Activated T-helper 1 cell treated with anti-CD3 and anti-CD28 coated beads, Interleukin-12 subunit alpha, Interleukin-12 subunit beta, Interleukin-2, Interleukin-4 antibody, amounts not matched to agents 30 ng/mL and 10 ng/mL and 1 ng/mL, durations not matched to agents 14 hours and 24 hours and 36 hours (primary cell): ENCODE measurements at regions of chr6 and their contacts with region 1.

Region 1: GRCh38 chr6:89371849-89372505 is 19.5 kb upstream of the UBE2J1 start:
- DNase-seq: peak; percentile 75
- H3K4me3 Mint-ChIP-seq: peak overlapping the region; percentile 49
- H3K27ac Mint-ChIP-seq: peak overlapping the region; percentile 59
- H3K4me1 Mint-ChIP-seq: peaks cover 46% of the 10 kb centered on the region
- H3K27me3 Mint-ChIP-seq: no peaks in the 10 kb centered on the region

Region 2: DNA sequence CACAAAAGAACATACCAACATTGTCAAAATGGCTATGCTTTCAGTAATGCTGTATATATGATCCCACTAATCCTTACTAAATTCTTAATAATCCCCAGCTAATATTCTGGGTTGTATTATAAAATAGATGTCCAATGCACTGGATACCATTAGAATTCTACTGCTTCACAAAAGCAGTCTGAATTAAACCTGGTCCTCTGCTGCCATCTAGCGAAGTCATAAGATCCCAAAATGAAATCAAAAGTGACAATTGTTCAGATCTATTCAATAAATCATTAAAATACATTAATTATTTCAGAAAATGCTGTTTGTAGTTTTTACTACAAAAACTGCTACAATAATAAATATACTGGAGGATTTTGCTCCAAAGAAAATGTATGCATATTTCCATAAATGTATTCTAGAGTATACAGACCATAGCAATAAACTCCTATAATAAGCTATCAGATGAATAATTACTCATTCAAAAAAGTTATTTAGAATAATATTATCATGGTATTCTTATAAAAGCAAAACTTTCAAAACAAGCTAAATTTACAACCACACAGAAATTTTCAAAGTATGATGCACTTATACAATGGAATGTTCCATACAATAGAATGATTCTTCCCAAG is 501.2 kb before region 1 on chr6:
- intact Hi-C with region 1: no loop called
- DNase-seq: peak; percentile 17
- H3K4me3 Mint-ChIP-seq: no peak overlapping the region
- H3K27ac Mint-ChIP-seq: no peak overlapping the region
- H3K4me1 Mint-ChIP-seq: peaks cover 44% of the 10 kb centered on the region
- H3K27me3 Mint-ChIP-seq: no peaks in the 10 kb centered on the region

Region 3: DNA sequence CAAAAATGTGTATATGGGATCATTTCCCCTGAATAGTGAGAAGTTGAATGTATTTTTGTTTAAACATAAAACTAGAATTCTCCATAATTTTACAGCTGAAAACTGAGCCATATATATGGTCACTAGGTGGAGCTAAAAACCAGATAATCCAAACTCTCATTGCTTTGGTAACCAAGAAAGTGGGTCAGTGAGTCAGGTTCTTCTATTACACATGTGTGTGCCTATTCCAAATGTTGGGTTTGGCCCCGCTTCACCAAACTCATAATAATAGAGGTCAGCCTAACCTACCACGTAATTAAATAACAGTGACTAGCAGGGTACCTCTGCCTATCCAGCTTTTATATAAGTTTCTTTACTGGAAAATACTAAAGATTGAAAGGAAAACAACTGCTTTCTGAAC is 389.3 kb before region 1 on chr6:
- intact Hi-C with region 1: loop called (anchors 1 kb)
- DNase-seq: no peak
- H3K4me3 Mint-ChIP-seq: no peak overlapping the region
- H3K27ac Mint-ChIP-seq: no peak overlapping the region
- H3K4me1 Mint-ChIP-seq: no peaks in the 10 kb centered on the region
- H3K27me3 Mint-ChIP-seq: peaks cover 4% of the 10 kb centered on the region

Region 4: GRCh38 chr6:89297695-89298351 is 74.2 kb before region 1 on chr6:
- intact Hi-C with region 1: loop called (anchors 1 kb)
- DNase-seq: peak; percentile 64
- H3K4me3 Mint-ChIP-seq: peak overlapping the region; percentile 43
- H3K27ac Mint-ChIP-seq: peak overlapping the region; percentile 97
- H3K4me1 Mint-ChIP-seq: peaks cover 28% of the 10 kb centered on the region
- H3K27me3 Mint-ChIP-seq: peaks cover 2% of the 10 kb centered on the region

Region 5: GRCh38 chr6:89360415-89360999 is 11.5 kb before region 1 on chr6:
- intact Hi-C with region 1: loop called (anchors 1 kb)
- DNase-seq: no peak
- H3K4me3 Mint-ChIP-seq: peak overlapping the region; percentile 16
- H3K27ac Mint-ChIP-seq: peak overlapping the region; percentile 74
- H3K4me1 Mint-ChIP-seq: peaks cover 73% of the 10 kb centered on the region
- H3K27me3 Mint-ChIP-seq: no peaks in the 10 kb centered on the region

Region 6: DNA sequence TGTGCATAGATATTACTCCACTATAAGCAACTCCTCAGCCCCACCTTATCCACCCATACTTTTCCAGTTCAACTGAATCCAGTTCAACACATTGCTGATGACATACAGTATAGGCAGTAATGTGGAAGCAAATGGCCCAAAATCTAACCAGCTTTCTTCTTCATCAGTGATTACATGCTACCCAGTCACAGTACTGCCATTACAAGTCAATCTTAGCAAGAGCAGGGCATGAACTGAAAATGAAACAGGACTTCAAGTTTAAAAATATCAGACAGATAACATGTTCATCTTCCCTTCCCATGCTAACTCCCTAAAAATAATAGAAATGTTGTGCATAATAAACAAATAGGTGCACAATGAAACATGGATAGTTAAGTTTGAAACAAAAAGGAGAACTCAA is 20.8 kb after region 1 on chr6:
- intact Hi-C with region 1: no loop called
- DNase-seq: no peak
- H3K4me3 Mint-ChIP-seq: no peak overlapping the region
- H3K27ac Mint-ChIP-seq: no peak overlapping the region
- H3K4me1 Mint-ChIP-seq: peaks cover 5% of the 10 kb centered on the region
- H3K27me3 Mint-ChIP-seq: peaks cover 2% of the 10 kb centered on the region

Region 7: DNA sequence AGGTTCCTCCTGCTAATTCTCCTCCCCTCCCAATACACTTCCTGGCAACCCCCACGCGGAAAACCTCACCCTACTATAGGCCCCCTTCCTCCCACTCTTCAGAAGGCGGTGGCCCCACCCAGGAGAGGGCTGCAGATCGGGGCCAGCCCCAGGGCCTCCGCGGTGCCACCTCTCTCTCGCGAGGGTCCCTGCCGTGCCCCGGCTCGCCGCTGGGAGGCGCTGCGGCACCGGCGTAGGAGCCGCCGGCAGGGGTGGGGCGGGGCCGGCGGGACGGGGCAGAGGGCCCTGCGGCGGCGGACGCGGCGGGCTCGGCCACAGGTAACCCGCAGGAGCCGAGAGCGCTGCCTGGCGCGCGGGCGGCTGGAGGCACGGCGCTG is 60.9 kb after region 1 on chr6 and contains the start of gene ANKRD6:
- intact Hi-C with region 1: loop called (anchors 1 kb)
- DNase-seq: peak; percentile 80
- H3K4me3 Mint-ChIP-seq: peak within 1 kb of the TSS; percentile 87
- H3K27ac Mint-ChIP-seq: peak within 1 kb of the TSS; percentile 70
- H3K4me1 Mint-ChIP-seq: peaks cover 18% of the 10 kb centered on the region
- H3K27me3 Mint-ChIP-seq: peaks cover 32% of the 10 kb centered on the region
- total RNA-seq, gene ANKRD6: 1.3 and 2.3 TPM in 2 replicates

Region 8: DNA sequence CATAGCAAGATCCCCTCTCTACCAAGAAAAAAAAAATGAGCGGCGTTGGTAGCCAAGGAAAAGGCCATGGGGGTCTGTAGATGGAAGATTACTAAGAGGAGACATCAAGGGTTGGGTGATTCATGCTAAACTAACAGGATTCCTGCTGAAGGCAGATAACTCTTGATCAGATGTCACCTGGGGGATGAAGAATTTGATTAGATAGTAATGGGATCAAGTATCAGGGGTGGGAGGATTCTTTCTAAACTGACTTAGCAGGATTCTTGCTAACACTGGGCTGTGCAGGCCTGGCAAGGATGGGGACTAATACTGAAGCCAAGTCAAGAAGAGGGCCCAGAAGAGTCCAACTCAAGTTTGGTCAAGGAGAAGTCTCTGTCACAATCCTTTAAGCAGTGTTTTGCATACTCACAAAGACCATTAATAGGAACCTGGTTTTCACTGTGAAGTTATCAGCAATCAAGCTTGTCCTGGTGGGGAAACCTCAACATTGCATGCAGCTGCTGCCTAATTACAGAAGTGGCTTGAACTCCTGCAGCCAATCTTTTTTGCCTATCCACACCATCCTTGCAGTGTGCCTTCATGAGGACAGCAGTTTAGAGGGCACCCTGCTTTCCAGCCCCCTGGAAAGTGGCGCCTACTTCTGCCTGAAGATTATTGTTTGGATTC is 122.3 kb after region 1 on chr6:
- intact Hi-C with region 1: no loop called
- DNase-seq: no peak
- H3K4me3 Mint-ChIP-seq: no peak overlapping the region
- H3K27ac Mint-ChIP-seq: no peak overlapping the region
- H3K4me1 Mint-ChIP-seq: no peaks in the 10 kb centered on the region
- H3K27me3 Mint-ChIP-seq: peaks cover 10% of the 10 kb centered on the region

Region 9: GRCh38 chr6:89597988-89598692 is 226.2 kb after region 1 on chr6:
- intact Hi-C with region 1: loop called (anchors 5 kb)
- DNase-seq: no peak
- H3K4me3 Mint-ChIP-seq: peak overlapping the region; percentile 12
- H3K27ac Mint-ChIP-seq: peak overlapping the region; percentile 75
- H3K4me1 Mint-ChIP-seq: peaks cover 45% of the 10 kb centered on the region
- H3K27me3 Mint-ChIP-seq: no peaks in the 10 kb centered on the region

Region 10: GRCh38 chr6:89638320-89639195 is 266.6 kb after region 1 on chr6 and contains the start of gene LYRM2:
- intact Hi-C with region 1: loop called (anchors 1 kb)
- DNase-seq: peak; percentile 89
- H3K4me3 Mint-ChIP-seq: peak within 1 kb of the TSS; percentile 94
- H3K27ac Mint-ChIP-seq: peak within 1 kb of the TSS; percentile 96
- H3K4me1 Mint-ChIP-seq: peaks cover 29% of the 10 kb centered on the region
- H3K27me3 Mint-ChIP-seq: no peaks in the 10 kb centered on the region
- total RNA-seq, gene LYRM2: 32.8 and 34.7 TPM in 2 replicates